GM10248 (cell line): ENCODE measurements at regions of chr20 and their contacts with region 1.

Region 1: GRCh38 chr20:34312544-34313217 is 9.5 kb upstream of the AHCY start:
- DNase-seq: peak; percentile 88
- CTCF ChIP-seq: peak; percentile 100

Region 2: GRCh38 chr20:34190679-34191090 is 122.0 kb before region 1 on chr20:
- CTCF ChIA-PET with region 1: interaction called, 14 read pairs
- POLR2A ChIA-PET with region 1: no interaction called
- DNase-seq: peak; percentile 66
- CTCF ChIP-seq: peak; percentile 87

Region 3: GRCh38 chr20:34334654-34335407 is 22.1 kb after region 1 on chr20:
- CTCF ChIA-PET with region 1: interaction called, 33 read pairs
- POLR2A ChIA-PET with region 1: no interaction called
- DNase-seq: no peak
- CTCF ChIP-seq: no peak

Region 4: GRCh38 chr20:34473262-34473883 is 160.7 kb after region 1 on chr20:
- CTCF ChIA-PET with region 1: interaction called, 19 read pairs
- POLR2A ChIA-PET with region 1: no interaction called
- DNase-seq: peak; percentile 50
- CTCF ChIP-seq: peak; percentile 64

Region 5: DNA sequence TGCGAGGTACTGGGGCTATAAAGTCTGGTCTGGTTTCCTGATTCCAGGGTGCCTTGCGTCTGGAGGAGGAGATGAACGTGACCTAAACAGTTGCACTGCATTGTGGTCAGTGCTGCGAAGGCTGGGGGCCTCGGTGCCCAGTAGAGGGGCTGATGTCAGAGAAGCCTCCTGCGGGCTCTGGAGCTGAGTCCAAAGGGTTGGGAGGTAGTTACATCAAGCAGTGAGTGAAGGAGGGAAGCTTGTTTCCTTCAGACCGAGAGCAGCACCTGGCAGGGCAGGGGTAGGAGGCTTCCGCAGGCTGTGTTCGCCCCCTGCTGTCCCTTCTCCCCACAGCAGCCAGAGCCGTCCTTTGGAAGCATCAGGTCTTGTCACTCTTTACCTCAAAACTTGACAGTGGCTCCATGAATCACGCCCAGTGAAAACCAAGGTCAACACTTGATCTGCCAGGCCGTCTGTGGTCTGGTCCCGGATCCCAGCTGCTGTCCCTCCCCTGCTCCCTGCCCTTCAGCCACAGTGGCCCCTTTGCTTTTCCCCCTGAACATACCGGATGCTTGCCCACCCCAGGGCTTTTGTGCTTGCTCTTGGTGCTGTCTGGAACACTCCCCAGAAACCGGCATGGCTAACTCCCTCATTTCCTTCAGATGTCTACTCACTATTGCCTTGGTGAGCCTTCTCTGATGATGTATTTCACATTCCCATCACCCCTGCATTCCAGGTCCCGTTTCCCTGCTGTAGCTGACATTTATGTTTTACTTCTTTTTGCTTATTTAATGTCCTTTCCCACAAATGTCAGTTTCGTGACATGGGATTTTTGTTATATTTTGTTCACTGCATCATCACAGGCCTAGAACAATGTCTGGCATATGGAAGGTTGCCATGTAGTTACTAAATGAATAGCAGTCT is 210.5 kb after region 1 on chr20:
- CTCF ChIA-PET with region 1: interaction called, 81 read pairs
- POLR2A ChIA-PET with region 1: no interaction called
- DNase-seq: peak; percentile 61
- CTCF ChIP-seq: peak; percentile 50

Region 6: DNA sequence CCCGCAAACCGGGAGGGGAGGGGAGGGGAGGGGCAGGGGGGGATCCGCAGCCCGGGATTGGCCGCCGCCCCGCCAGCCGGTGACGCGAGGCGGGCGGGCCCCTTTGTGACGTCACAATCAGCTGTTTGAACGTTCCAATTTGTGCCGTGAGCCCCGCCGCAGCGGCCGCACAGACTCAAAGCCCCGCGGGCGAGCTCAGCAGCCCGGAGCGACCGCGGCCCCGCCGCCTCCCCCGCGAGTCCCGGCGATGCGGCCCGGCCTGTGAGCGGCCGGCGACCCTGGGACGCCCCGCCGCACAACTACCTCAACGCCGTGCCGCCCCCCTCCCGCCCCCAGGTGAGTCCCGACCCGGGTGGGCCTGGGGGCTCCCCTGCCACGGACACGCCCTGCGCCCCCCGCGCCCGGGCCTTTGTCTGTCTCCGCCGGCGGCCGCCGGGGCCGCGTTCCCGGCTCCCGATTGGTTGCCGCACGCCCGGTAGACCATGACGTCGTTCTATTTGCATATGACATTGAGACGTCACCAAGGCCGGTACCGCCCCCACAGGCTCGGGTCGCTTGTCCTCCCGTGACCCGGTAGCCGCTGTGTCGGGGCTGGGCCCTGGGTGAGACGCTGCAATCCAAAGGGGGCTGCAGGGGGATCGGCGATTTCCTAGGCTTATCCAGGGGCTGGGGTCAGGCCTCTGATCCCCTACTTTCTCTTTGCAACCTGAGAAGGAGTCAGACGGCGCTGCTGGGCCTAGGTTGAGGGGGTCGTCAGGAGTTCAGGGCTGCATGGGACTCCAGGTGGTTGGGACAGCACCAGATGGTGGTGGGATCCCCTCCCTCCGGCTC is 391.7 kb after region 1 on chr20 and contains the start of gene TP53INP2:
- CTCF ChIA-PET with region 1: interaction called, 28 read pairs
- POLR2A ChIA-PET with region 1: no interaction called
- DNase-seq: peak; percentile 89
- CTCF ChIP-seq: no peak